ENCODE measurements at regions of chr22 and their contacts with region 1.

Region 1: GRCh38 chr22:29625090-29625825 is 21.8 kb downstream of the NF2 start:
- DNase-seq: peak; percentile 59
- H3K4me3 Mint-ChIP-seq: no peak overlapping the region
- H3K27ac Mint-ChIP-seq: no peak overlapping the region
- H3K4me1 Mint-ChIP-seq: peaks cover 70% of the 10 kb centered on the region
- H3K27me3 Mint-ChIP-seq: no peaks in the 10 kb centered on the region

Region 2: GRCh38 chr22:29587938-29588699 is 37.1 kb before region 1 on chr22:
- CTCF ChIA-PET with region 1: interaction called, 13 read pairs
- intact Hi-C with region 1: loop called (anchors 1 kb)
- DNase-seq: no peak
- H3K4me3 Mint-ChIP-seq: no peak overlapping the region
- H3K27ac Mint-ChIP-seq: no peak overlapping the region
- H3K4me1 Mint-ChIP-seq: peaks cover 8% of the 10 kb centered on the region
- H3K27me3 Mint-ChIP-seq: no peaks in the 10 kb centered on the region

Region 3: DNA sequence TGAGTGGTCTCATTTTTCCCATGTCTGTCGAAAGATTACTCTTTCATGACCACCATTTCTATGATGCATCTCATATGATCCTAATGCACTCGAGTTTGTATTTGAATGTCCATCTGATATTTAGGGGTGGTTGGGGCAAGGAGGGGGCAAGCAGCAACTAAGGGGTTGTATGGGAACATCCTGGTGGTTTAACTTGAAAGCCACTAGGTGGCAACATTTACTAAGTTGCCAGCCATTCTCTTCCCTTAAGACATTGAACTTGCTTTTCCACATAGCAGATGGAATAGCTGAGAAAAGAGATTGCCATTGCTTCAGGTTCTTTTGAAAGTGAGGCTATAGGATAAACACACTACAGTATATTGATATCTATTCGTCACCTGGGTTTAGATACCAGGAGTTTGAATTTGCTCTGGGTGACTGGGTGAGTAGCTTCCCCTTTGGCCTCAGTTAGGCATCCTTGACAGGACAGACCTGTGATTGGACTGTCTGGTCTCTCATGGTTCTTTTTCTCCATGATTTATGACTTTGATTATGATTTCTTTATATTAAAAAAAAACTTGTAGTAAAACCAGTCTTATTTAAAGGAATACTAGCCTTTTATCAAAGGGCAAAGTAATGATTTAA is 10.6 kb after region 1 on chr22:
- CTCF ChIA-PET with region 1: interaction called, 49 read pairs
- intact Hi-C with region 1: no loop called
- DNase-seq: no peak
- H3K4me3 Mint-ChIP-seq: no peak overlapping the region
- H3K27ac Mint-ChIP-seq: no peak overlapping the region
- H3K4me1 Mint-ChIP-seq: peaks cover 21% of the 10 kb centered on the region
- H3K27me3 Mint-ChIP-seq: no peaks in the 10 kb centered on the region

Measured in activated naive CD4-positive, alpha-beta T cell treated with anti-CD3 and anti-CD28 coated beads for 36 hours (primary cell).